ENCODE measurements at regions of chr10 and their contacts with region 1.

Region 1: DNA sequence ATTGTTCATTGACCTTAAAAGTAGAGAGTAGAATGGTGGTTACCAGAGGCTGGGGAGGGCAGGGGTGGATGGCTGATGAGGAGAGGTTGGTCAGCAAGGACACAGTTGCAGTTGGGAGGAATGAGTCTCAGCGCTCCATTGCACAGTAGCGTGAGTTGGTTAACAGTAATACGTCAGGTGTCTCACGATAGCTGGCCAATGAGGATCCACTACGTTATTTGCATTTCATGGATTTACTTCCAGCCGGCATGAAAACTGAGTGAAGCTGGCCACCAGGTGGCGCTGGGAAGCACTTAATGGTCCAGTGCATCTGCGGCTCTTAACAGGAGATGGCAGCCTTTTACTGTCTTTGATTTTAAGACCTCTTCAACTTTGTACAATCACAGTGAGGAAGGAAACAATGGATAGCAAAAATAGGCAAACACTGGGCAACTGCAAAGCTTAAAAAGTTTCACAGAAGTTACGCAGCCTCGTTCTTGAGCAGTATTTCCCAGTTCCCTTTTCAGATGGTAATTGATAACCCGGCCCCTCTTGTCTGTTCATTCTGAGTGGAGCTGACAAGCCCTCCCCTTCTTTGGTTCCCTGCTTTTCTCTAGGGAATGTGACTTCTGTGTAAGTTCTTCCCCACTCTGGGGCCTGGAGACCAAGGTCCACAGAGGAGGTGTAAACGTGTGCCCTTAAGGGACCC is 23.7 kb downstream of the AKR1E2 start:
- DNase-seq: peak; percentile 75
- H3K4me3 ChIP-seq: peak overlapping the region in 1 of 2 experiments; percentile 24; a peak in 1 of 4 replicates
- H3K27ac ChIP-seq: no peak overlapping the region
- H3K4me1 ChIP-seq: peaks cover 3 to 13% of the 10 kb centered on the region in 2 experiments; a peak in 2 of 4 replicates
- H3K27me3 ChIP-seq: no peaks in the 10 kb centered on the region
- CTCF ChIP-seq: peak; percentile 100
- EP300 ChIP-seq: no peak
- RAD21 ChIP-seq: peak; percentile 99

Region 2: DNA sequence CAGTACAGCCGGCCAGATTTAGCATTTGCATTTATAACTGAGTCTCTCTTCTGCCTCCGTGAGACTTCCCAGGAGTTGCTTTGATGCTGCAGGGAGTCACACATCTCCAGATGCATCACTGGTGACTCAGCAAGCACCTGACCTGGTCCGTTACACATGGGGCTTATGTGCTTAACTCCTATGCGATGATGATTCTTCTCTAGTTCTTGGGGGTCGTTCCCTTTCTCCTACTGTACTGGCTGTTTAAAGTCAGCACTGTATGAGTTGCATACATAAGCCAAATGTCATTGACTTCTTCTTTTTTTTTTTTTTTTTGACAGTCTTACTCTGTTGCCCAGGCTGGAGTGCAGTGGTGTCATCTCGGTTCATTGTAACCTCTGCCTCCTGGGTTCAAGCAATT is 36.7 kb before region 1 on chr10:
- CTCF ChIA-PET with region 1: interaction called, 37 read pairs
- POLR2A ChIA-PET with region 1: no interaction called
- DNase-seq: no peak
- H3K4me3 ChIP-seq: no peak overlapping the region
- H3K27ac ChIP-seq: peak overlapping the region in 1 of 2 experiments; percentile 68; a peak in 2 of 4 replicates
- H3K4me1 ChIP-seq: peaks cover 0 to 14% of the 10 kb centered on the region in 2 experiments; a peak in 1 of 4 replicates
- H3K27me3 ChIP-seq: no peaks in the 10 kb centered on the region
- CTCF ChIP-seq: no peak
- EP300 ChIP-seq: peak in 1 of 2 experiments; percentile 71; a peak in 1 of 4 replicates
- RAD21 ChIP-seq: no peak

Region 3: DNA sequence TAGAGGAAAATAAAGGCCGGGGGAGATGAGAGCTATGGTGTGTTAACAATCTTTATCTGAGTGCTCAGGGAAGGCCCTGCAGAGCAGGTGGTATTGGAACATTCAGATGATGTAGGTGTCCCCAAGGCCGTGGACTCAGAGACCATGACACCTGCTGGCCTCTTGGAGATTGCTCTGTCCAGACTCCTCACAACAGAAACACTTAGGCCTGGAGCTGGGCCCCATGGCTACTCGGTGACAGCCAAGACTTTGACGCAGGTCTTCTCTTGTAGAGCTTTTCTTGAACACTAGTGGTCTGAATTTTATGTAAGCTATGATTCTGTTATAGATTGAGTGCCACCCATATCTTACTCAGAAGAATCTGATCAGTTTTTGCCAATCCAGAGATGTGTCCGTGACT is 10.3 kb before region 1 on chr10:
- CTCF ChIA-PET with region 1: interaction called, 81 read pairs
- POLR2A ChIA-PET with region 1: interaction called, 3 read pairs
- DNase-seq: no peak
- H3K4me3 ChIP-seq: no peak overlapping the region
- H3K27ac ChIP-seq: peak overlapping the region in 1 of 2 experiments; percentile 19; a peak in 2 of 4 replicates
- H3K4me1 ChIP-seq: peaks cover 0 to 18% of the 10 kb centered on the region in 2 experiments; a peak in 2 of 4 replicates
- H3K27me3 ChIP-seq: no peaks in the 10 kb centered on the region
- CTCF ChIP-seq: no peak
- EP300 ChIP-seq: no peak
- RAD21 ChIP-seq: no peak

Region 4: DNA sequence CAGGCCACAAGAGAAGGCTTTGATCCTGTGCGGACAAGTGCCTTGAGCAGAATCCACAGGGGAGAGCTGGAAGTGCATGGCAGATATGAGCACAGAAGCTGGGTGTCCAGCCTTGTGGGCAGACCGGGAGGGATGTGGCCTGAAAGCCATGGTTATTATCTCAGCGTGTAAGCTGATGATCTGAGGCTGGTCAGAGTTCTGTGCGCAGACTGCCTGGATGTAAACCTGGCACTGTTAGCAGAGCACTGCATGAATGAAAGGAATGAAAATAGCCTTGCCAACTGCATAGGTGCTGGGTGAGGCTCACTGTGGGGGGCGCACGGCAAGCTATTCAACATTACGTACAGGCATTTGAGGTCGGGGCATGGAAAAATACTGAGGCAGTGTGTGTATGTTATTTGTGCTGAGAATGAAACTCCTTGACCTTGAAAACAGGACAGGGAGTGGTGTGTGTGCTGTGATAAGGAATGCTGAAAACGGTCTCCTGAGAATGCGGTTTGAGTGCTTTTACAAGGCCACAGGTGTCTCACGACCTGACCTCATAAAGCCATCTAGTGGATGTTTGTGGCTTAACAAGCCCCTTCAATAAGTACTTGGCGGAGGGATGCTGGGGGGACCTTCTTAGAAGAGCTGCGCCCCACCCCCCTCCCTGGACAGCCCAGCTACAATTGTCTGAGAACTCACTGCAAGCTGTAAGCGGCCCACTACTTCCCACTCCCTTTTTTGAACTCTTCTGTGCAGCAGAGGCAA is 132.2 kb after region 1 on chr10:
- CTCF ChIA-PET with region 1: interaction called, 57 read pairs
- POLR2A ChIA-PET with region 1: no interaction called
- DNase-seq: peak; percentile 12
- H3K4me3 ChIP-seq: no peak overlapping the region
- H3K27ac ChIP-seq: no peak overlapping the region
- H3K4me1 ChIP-seq: no peaks in the 10 kb centered on the region; a peak in 1 of 4 replicates
- H3K27me3 ChIP-seq: no peaks in the 10 kb centered on the region
- CTCF ChIP-seq: peak; percentile 44; the same call in 1 of the 2 replicates
- EP300 ChIP-seq: no peak
- RAD21 ChIP-seq: peak; percentile 48

Region 5: DNA sequence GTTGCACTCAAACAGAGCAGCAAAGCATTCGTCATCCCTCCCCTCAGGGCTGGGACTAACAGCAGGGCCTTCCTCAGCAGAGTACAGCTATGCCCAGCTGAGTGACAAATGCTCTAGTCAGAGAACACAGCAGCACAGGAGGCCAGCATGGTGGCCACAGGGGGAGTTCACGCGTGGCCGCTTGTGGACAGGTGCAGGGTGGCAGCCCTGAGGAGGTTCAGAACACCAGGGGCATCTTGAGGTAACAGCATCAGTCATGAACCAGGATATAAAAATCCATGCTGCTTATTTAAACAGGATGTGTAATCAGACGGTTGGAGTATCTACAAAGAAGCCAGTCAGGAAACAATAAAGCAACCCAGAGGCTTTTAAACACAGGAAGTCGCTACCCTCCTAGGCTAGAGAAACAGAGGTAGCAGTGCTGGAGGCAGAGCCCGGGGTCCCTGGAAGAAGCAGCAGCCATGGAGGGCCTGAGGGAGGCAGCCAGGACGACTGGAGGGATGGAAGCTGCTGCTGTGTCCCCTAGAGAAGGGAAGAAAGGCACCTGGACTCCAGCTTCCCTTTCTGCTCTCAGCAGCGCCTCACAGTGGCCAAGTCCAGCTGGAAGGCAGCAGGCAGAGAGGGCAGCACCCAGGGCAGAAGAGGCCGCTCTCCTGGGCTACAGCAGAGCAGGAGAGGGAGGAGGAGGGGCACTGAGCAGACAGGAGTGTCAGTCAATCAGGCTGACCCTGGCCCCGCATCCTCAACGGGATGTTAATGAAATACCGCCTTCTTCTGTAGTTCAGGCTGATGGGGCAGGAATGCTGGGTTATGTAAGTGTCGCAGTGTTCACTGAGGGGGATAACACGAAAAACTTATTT is 444.2 kb after region 1 on chr10:
- CTCF ChIA-PET with region 1: interaction called, 12 read pairs
- POLR2A ChIA-PET with region 1: no interaction called
- DNase-seq: peak; percentile 45
- H3K4me3 ChIP-seq: no peak overlapping the region
- H3K27ac ChIP-seq: no peak overlapping the region
- H3K4me1 ChIP-seq: no peaks in the 10 kb centered on the region; a peak in 2 of 4 replicates
- H3K27me3 ChIP-seq: no peaks in the 10 kb centered on the region; the same call in 1 of the 2 replicates
- CTCF ChIP-seq: peak; percentile 49
- EP300 ChIP-seq: no peak
- RAD21 ChIP-seq: 0 out of 2 replicates have a peak, but pooled peaks have one; percentile 9

Region 6: DNA sequence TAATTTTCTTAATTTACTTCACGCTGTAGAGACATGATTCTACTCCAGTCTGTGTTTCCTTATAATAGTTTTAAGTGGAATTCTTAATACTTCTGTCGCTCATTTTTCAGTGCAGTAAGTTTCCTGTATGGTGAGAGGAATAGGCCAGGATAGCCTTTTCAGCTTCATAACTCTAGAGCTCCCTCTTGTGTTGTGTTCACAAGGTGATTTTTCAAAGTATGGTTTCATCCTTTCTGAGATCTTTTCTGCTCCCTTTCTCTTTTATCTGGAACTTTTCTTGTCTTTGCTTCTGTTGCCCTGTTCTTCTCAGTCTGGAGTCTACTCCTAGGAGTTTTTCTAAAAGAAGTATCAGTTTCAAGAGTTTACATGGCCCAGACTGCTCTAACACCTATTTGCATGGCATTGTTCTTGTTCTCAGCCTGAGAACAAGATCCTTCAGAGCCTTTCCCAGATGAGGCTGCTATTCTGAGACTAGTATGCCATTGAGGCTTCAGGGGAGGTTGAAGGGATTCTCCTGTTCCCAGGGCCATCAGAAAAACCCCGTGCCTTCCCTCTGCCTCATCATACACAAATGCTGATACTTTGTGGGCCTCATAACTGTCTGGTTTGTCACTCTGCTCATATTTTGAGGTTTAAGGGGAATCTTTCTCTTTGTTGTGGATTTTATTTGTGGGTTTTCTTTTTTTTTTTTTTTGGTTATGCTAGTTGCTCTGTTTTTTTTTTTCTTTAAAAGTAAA is 584.5 kb after region 1 on chr10:
- CTCF ChIA-PET with region 1: interaction called, 36 read pairs
- POLR2A ChIA-PET with region 1: no interaction called
- DNase-seq: peak; percentile 47
- H3K4me3 ChIP-seq: peak overlapping the region in 1 of 2 experiments; percentile 47; a peak in 2 of 4 replicates
- H3K27ac ChIP-seq: peak overlapping the region; percentile 60 to 89
- H3K4me1 ChIP-seq: peaks cover 0 to 13% of the 10 kb centered on the region in 2 experiments; a peak in 3 of 4 replicates
- H3K27me3 ChIP-seq: no peaks in the 10 kb centered on the region
- CTCF ChIP-seq: peak; percentile 78
- EP300 ChIP-seq: no peak
- RAD21 ChIP-seq: peak; percentile 77

Measured in SK-N-SH (cell line).